ENCODE measurements at regions of chr10 and their contacts with region 1.

Region 1: DNA sequence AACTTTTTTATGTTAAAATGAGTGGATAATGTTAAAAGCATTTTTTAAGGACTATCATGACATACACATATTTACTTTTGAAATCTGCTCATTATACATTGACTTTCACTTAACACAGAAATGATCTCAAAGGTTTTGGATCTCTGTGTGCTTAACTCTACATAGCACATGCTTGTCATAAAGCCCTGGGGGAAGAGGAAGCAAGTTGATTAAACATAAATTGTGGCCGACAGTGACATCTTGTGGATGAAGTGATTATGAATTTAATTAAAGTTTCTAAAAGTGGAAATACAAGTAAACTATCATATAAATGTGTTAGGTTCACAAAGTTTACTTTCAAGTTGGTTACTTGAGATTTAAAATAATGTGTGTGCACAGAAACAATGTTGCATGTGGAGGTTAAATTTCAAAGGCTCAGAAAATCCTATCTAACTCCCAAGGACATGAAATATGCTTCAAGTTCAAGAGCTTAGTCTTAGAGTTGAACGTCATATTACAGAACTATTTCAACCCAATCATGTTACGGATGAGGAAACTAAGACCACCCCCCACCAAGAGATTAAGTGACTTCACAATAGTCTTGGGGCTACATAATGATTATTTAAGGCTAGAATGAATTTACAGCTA is 1247.7 kb downstream of the GATA3 start:
- DNase-seq: no peak
- ATAC-seq: peak; percentile 64
- H3K4me3 ChIP-seq: no peak overlapping the region
- H3K27ac ChIP-seq: no peak overlapping the region
- H3K4me1 ChIP-seq: no peaks in the 10 kb centered on the region
- H3K27me3 ChIP-seq: no peaks in the 10 kb centered on the region
- CTCF ChIP-seq: peak; percentile 15 to 44 (median 22); a peak in 2 of 6 replicates
- EP300 ChIP-seq: no peak
- POLR2A ChIP-seq: no peak
- RAD21 ChIP-seq: peak; percentile 54

Region 2: DNA sequence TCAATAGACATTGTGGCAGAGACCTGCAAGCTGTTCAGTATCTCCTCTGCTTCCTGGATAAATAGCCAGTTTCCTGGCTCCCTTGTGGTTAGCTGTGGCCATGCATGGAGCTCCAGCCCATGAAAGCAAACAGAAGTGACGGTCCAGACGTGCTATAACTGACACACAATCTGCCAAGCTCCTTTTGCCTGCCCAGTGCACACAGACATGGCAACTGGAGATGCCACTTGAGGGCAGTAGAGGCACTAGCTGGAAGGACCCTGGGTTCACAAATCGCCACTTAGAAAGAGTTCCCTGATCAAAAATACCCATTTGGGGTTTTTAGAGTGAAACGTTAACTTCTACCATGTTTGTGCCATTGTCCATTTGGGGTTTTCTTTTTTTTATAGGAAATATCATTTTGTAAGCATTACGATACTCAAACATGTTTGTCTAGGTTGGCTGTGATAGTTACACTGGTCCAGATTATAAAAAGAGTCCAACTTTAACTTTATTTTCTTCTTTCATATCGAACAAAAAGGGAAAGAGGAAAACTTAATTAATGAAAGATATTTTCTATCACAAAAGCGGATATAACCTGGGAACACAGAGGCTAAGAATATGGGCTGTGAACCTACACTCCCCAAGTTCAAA is 1545.8 kb before region 1 on chr10:
- CTCF ChIA-PET with region 1: no interaction called
- POLR2A ChIA-PET with region 1: no interaction called
- RAD21 ChIA-PET with region 1: no interaction called
- SMC1A ChIA-PET with region 1: no interaction called
- in situ Hi-C with region 1: no loop called
- intact Hi-C with region 1: loop called (anchors 10 kb)
- DNase-seq: no peak
- ATAC-seq: peak; percentile 83
- H3K4me3 ChIP-seq: no peak overlapping the region
- H3K27ac ChIP-seq: no peak overlapping the region
- H3K4me1 ChIP-seq: no peaks in the 10 kb centered on the region
- H3K27me3 ChIP-seq: no peaks in the 10 kb centered on the region
- CTCF ChIP-seq: peak; percentile 50 to 61 (median 53)
- EP300 ChIP-seq: no peak
- POLR2A ChIP-seq: no peak
- RAD21 ChIP-seq: peak; percentile 34

Region 3: GRCh38 chr10:7872041-7872442 is 1430.2 kb before region 1 on chr10:
- CTCF ChIA-PET with region 1: interaction called, 3 read pairs
- POLR2A ChIA-PET with region 1: no interaction called
- RAD21 ChIA-PET with region 1: no interaction called
- SMC1A ChIA-PET with region 1: no interaction called
- in situ Hi-C with region 1: loop called (anchors 5 kb)
- intact Hi-C with region 1: loop called (anchors 5 kb)
- DNase-seq: no peak
- ATAC-seq: no peak
- H3K4me3 ChIP-seq: peak overlapping the region; percentile 47; the same call in 1 of the 2 replicates
- H3K27ac ChIP-seq: no peak overlapping the region
- H3K4me1 ChIP-seq: no peaks in the 10 kb centered on the region
- H3K27me3 ChIP-seq: no peaks in the 10 kb centered on the region
- CTCF ChIP-seq: peak; percentile 58 to 65 (median 62)
- EP300 ChIP-seq: no peak
- POLR2A ChIP-seq: no peak
- RAD21 ChIP-seq: peak; percentile 94

Region 4: DNA sequence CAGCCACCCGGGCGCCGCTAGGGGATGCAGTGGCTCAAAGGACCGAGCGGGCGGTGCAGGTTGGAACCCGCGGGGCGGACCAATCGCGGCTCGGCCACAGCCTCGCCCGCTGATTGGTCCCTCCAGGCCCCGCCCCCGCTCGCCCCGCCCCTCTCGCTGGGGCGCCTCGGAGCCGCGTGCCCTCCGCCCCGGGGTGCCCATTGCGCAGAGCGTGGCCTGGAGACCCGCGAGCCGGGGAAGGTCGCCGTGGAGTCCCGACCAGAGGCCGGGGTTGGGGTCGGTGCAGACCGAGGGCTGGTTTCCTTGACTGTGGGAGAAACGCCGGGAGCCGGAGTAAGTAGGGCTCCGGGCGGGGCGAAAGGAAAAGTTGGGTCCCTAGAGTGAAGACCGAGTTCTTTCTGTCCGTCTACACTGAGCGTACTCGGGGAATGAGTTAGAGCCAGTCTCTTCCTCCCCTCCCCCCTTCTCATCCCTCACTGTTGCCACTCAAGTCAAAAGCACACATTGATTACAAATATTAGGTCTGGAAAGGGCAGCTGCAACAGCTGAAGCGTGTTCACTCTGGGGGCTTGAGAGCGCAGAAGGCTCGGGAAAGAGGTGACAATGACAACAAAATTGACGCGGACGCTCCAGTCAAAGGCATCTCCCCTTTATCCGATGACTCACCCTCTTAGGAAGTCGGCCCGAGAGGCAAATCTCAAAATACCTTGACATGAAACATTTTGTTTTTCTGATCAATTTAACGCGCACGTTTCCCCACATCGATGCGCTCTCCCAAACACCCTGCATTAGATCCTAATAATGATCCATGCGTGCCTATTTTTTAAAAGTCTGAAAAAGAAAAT is 1248.6 kb before region 1 on chr10:
- CTCF ChIA-PET with region 1: no interaction called
- POLR2A ChIA-PET with region 1: no interaction called
- RAD21 ChIA-PET with region 1: no interaction called
- SMC1A ChIA-PET with region 1: no interaction called
- in situ Hi-C with region 1: no loop called
- intact Hi-C with region 1: loop called (anchors 10 kb)
- DNase-seq: no peak
- ATAC-seq: peak; percentile 84
- H3K4me3 ChIP-seq: peak overlapping the region; percentile 54
- H3K27ac ChIP-seq: no peak overlapping the region
- H3K4me1 ChIP-seq: peaks cover 10% of the 10 kb centered on the region; the same call in 1 of the 2 replicates
- H3K27me3 ChIP-seq: peaks cover 10 to 11% of the 10 kb centered on the region in 2 experiments
- CTCF ChIP-seq: peak; percentile 84 to 98 (median 96); a peak in 5 of 6 replicates
- EP300 ChIP-seq: no peak
- POLR2A ChIP-seq: peak; percentile 33; the same call in 1 of the 2 replicates
- RAD21 ChIP-seq: 0 out of 2 replicates have a peak, but pooled peaks have one; percentile 77

Region 5: DNA sequence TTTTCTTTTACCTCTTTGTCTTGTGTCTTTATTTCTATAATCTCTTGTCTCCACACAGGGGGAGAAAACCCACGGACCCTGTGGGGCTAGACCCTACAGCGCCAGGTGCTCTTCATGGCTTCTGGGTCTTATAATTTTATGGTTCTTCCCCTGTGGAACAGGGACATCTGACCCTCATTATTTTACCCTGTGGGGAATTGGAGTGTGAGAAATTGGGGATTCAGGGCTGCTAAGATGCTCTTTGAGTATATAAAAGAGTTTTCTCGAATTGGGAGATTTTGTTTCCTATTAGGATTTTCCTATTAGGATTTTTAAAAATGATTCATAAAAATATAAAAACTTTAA is 100.6 kb after region 1 on chr10:
- CTCF ChIA-PET with region 1: no interaction called
- POLR2A ChIA-PET with region 1: no interaction called
- RAD21 ChIA-PET with region 1: no interaction called
- SMC1A ChIA-PET with region 1: no interaction called
- in situ Hi-C with region 1: no loop called
- intact Hi-C with region 1: no loop called
- DNase-seq: no peak
- ATAC-seq: no peak
- H3K4me3 ChIP-seq: no peak overlapping the region
- H3K27ac ChIP-seq: no peak overlapping the region
- H3K4me1 ChIP-seq: no peaks in the 10 kb centered on the region
- H3K27me3 ChIP-seq: no peaks in the 10 kb centered on the region
- CTCF ChIP-seq: no peak
- EP300 ChIP-seq: no peak
- POLR2A ChIP-seq: no peak
- RAD21 ChIP-seq: no peak